ENCODE measurements at regions of chr13 and their contacts with region 1.

Region 1: GRCh38 chr13:77779552-77780272 is 82.2 kb downstream of the SLAIN1 start:
- DNase-seq: no peak

Region 2: DNA sequence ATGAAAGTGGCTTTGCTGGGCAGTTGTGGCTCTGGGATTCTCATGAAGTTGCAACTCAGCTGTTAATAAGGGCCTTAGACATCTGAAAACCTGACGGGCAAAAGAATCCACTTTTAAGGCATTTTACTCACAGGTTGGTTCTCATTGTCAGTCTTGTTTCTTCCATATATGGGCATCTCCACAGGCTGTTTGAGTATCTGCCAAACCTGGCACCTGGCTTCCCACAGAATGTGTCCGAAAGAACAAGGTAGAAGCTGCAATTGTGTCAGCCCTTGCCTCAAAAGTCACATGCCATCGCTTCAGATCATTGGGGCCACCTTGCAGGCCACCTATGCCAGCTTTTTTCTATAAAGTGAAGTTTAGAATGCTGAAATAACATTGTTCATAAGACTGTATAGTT is 995.9 kb before region 1 on chr13:
- intact Hi-C with region 1: no loop called
- DNase-seq: no peak

Region 3: DNA sequence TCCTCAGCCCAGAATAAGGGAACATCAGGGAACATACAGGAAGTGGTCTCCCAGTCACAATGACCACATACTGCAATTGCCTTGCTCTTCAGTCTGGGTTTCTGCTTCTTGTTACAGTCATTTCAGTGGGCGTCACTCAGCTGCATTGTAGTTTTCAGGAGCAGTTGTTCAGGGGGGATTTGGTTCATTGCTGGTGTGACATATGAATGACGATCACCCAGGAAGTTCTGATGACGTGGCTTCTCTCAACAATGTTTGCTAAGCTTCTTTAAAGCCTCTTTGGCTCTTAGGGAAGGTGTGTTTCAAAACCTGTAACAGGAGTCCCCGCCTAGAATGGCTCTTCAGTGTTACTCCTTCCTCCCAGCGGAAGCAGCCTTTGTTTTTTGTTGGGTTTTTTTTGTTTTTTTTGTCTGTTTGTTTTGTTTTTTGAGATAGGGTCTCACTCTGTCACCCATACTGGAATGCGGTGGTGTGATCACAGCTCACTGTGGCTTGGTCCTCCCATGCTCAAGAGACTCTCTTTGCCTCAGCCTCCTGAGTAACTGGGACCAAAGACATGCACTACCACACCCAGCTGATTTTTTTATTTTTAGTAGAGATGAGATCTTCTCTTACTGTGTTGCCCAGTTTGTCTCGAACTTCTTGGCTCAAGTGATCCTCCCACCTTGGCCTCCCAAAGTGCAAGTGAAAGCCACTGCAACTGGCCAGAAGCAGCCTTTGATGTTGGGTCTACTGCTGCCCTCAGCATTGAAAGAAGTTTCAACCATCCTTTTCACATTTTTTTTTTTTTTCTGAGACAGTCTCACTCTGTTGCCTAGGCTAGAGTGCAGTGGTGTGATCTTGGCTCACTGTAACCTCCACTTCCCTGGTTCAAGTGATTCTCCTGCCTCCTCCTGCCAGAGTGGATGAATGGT is 245.6 kb before region 1 on chr13:
- intact Hi-C with region 1: no loop called
- DNase-seq: no peak

Region 4: DNA sequence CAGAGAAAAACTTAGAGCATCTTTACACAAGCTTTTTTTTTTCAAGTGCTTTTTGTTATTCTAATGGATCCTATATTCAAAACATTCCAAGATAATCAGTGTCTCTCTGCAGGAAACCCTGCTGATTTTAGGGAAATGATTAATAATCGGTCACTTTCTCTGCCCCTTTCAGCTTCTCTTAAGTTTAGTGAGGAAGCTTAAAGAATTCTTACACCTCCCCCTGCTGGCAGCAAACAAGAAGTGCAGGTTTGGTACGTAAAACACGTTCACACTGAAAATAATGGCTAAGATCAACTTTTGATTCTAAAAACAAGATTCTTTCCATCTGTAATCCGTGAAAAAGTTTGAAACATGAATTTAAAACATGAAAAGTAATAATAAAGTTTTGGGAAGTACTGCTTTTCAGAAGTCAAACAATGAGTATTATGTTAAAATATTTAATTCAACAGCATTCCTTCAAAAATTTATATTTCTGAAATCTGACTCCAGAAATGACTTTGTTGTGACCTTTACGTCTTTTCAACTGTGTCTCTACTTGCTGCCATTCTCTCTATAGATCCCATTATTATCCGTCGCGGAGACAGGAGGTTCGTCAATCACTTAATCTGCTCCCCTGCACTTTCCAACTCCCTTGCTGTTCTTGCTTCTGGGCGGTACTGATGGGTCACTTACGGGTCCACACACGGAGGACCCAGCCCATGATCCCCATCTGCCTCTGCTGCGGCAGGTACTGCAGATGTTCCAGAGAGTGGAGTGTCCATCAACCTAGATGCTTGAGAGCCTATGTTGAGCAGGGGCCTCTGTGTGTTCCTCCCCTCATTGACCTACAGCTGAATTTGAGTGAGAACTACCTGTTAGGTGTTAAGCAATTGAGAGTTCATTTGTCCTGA is 342.0 kb after region 1 on chr13:
- intact Hi-C with region 1: loop called (anchors 2 kb)
- DNase-seq: no peak